Astrocyte of the spinal cord (primary cell): ENCODE measurements at regions of chr11 and their contacts with region 1.

Region 1: GRCh38 chr11:27183672-27184457 is 143.2 kb downstream of the BBOX1 start:
- DNase-seq: peak; percentile 79
- H3K4me3 ChIP-seq: no peak overlapping the region
- CTCF ChIP-seq: peak; percentile 62

Region 2: GRCh38 chr11:27485930-27486773 is 302.3 kb after region 1 on chr11:
- in situ Hi-C with region 1: loop called (anchors 25 kb)
- DNase-seq: peak; percentile 75
- H3K4me3 ChIP-seq: no peak overlapping the region
- CTCF ChIP-seq: peak; percentile 83